ENCODE measurements at regions of chr1 and their contacts with region 1.

Region 1: DNA sequence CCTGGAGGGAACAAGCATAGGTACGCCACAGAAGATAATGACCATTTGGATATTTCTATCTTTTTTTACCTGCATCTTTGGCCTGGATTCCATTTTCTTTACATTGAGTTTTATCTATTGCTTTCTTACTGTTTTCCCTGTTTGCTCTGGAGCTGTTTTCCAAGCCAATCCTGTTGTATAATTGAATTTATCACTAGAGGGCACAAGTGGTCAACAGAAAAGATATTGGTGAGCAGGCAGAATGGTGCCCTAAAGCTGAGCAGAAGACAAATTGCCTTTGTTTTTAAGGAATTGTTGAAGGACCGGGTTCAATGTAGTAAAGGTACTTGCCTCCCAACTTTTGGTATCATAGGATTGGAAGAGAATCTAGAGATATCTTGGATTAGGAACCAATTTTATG is 152.8 kb downstream of the PPP1R12B start:
- DNase-seq: peak in 1 of 10 donors; percentile 17
- H3K4me3 ChIP-seq: no peak overlapping the region
- H3K27ac ChIP-seq: peak overlapping the region in 11 of 59 donors; percentile 1 to 57 (median 32)
- H3K27me3 ChIP-seq: no peaks in the 10 kb centered on the region
- CTCF ChIP-seq: peak in 55 of 56 donors; percentile 36 to 79 (median 65)

Region 2: DNA sequence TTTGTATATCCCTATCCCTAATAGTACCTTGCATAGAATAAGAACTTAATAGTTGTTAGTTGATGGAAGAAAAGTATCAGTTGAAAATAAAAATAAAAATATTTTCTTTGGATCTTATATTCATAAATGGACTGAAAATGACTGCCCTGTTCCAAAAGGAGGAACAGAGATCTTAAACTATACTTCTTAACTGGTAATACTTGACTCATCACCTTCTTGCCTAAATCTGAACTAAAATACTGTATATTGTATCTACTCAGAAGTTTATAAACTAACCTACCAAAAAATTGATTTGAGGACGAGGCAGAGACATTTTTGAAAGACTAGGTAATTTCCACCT is 30.2 kb after region 1 on chr1:
- intact Hi-C with region 1: no loop called
- DNase-seq: no peak
- H3K4me3 ChIP-seq: no peak overlapping the region
- H3K27ac ChIP-seq: peak overlapping the region in 7 of 59 donors; percentile 5 to 93 (median 53)
- H3K27me3 ChIP-seq: no peaks in the 10 kb centered on the region
- CTCF ChIP-seq: no peak

Region 3: GRCh38 chr1:202565890-202566602 is 64.8 kb after region 1 on chr1:
- intact Hi-C with region 1: loop called (anchors 5 to 10 kb)
- DNase-seq: no peak
- H3K4me3 ChIP-seq: no peak overlapping the region
- H3K27ac ChIP-seq: peak overlapping the region in 22 of 59 donors; percentile 0 to 67 (median 28)
- H3K27me3 ChIP-seq: no peaks in the 10 kb centered on the region
- CTCF ChIP-seq: peak in 1 of 56 donors; percentile 9

Region 4: DNA sequence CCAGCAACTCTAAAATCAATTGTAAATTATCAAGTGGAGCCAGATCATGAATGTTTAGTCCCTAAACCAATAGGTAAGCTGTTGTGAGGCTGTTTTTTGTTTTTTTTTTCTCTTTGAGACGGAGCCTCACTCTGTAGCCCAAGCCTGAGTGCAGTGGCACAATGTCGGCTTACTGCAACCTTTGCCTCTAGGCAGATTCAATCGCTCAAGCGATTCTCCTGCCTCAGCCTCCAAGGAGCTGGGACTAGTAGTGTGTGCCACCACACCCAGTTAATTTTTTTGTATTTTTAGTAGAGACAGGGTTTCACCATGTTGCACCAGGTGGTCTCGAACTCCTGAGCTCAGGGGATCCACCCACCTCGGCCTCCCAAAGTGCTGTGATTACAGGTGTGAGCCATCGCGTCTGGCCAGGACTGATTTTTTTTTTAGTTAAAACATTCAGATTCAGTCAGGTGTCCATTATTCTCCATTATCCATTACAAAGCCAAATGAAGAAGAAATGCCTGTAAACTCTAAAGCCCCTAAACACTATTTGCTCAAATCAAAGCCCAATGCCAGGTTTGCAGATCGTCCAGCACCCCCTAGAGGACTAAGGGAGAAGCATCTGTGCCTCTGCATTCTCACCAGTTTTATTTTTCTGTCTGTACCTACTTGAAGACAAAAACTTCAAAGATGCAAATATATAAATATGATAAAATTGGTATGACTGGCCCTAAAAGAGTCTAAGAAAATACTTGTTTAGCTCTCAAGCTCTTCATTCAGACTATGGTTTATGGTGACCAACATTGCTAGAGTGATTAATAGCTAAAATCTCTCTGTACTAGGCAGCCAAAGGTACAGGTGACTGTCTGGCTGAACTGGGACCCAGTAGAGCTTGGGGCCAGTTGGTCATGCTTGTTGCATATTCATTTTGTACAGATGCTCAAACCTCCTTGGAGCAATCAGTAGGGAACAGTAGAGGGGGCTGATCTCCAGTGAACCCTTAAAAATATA is 70.4 kb after region 1 on chr1:
- intact Hi-C with region 1: loop called (anchors 5 to 10 kb)
- DNase-seq: peak in 4 of 10 donors; percentile 16 to 57 (median 36)
- H3K4me3 ChIP-seq: no peak overlapping the region
- H3K27ac ChIP-seq: peak overlapping the region in 6 of 59 donors; percentile 2 to 47 (median 32)
- H3K27me3 ChIP-seq: no peaks in the 10 kb centered on the region
- CTCF ChIP-seq: peak; percentile 42 to 96 (median 81)